ENCODE measurements at regions of chr14 and their contacts with region 1.

Region 1: DNA sequence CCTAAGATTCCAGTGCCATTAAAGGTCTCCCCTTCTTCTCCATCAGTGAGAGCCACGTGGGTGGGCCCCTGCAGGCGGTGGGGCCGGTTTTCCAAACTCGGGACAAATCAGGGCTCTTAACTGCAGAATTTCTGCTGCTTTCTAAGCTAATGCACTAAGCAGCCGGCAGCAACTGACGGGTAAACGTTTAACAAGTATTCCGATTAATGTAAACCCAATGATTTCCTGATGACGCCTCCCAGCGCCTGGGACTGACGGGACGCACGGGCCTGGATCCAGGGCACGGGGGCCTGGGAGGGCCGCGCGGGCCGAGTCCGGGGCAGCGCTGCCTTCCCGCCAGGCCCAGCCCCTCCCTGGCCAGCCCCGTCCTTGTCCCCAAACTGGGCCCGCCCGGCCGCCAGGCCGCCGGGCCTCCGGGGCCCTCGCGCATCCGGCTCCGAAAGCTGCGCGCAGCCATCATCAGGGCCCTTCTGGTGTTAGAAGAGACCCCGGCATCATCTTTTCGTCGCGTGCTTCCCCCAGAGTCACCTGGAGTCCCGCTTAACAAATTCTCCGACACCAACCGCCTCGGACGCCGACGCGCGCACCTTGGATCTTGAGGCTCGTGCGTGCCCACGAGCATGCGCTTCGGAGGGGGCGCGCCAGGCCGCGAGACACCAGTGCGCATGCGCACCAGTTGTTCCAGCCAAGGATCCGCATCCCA is at the start of gene MLH3:
- DNase-seq: peak; percentile 80
- H3K4me3 ChIP-seq: peak within 1 kb of the TSS; percentile 60 to 74
- H3K27ac ChIP-seq: peak within 1 kb of the TSS; percentile 87 to 93
- H3K4me1 ChIP-seq: peaks cover 3% of the 10 kb centered on the region
- H3K27me3 ChIP-seq: no peaks in the 10 kb centered on the region
- CTCF ChIP-seq: no peak
- POLR2A ChIP-seq: peak; percentile 72
- total RNA-seq, gene MLH3: 23.3 to 29.6 TPM

Region 2: GRCh38 chr14:74793506-74794168 is 257.4 kb before region 1 on chr14:
- intact Hi-C with region 1: no loop called
- DNase-seq: no peak
- H3K4me3 ChIP-seq: no peak overlapping the region
- H3K27ac ChIP-seq: peak overlapping the region; percentile 6 to 39
- H3K4me1 ChIP-seq: peaks cover 4% of the 10 kb centered on the region
- H3K27me3 ChIP-seq: no peaks in the 10 kb centered on the region
- CTCF ChIP-seq: peak in 1 of 4 experiments; percentile 30
- POLR2A ChIP-seq: no peak

Region 3: DNA sequence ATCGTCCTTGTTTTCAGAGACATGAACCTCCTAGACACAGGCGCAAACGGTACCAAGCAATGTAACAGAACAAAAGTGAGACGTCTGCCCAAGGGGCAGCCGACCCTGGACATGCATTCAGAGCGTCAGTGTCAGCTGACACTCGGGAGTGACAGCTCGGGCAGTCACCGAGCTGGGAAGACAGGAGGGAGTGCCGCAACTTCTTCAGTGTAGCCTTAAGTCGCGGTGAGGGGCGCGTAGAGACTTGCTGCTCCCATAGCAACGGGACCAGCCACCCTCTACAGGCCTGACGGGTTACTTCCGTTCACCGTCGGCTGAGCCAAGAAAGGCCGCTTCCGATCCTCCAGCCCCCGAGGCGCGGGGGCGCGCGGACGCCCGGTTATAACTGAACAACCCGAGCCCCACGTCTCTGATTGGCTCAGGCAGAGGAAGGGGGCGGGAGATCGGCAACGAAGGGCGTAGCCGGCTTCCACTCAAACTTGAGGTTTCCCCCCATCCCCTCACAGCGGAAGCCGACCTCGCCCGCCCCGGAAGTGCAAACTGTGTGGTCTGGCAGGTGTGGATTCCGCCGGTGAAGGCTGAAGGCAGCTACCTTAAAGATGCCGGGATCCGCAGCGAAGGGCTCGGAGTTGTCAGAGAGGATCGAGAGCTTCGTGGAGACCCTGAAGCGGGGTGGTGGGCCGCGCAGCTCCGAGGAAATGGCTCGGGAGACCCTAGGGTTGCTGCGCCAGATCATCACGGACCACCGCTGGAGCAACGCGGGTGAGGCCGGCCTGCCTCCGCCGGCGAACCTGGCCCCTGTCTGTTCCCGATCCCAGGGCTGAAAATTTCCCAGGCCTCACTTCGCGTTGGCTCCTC is 48.4 kb before region 1 on chr14 and contains the start of gene EIF2B2:
- intact Hi-C with region 1: no loop called
- DNase-seq: peak; percentile 98
- H3K4me3 ChIP-seq: peak within 1 kb of the TSS; percentile 53 to 67
- H3K27ac ChIP-seq: peak within 1 kb of the TSS; percentile 67 to 80
- H3K4me1 ChIP-seq: peaks cover 8% of the 10 kb centered on the region
- H3K27me3 ChIP-seq: no peaks in the 10 kb centered on the region
- CTCF ChIP-seq: peak in 2 of 4 experiments; percentile 46 to 52
- POLR2A ChIP-seq: peak; percentile 45
- total RNA-seq, gene EIF2B2: 43.9 to 60.4 TPM

Region 4: DNA sequence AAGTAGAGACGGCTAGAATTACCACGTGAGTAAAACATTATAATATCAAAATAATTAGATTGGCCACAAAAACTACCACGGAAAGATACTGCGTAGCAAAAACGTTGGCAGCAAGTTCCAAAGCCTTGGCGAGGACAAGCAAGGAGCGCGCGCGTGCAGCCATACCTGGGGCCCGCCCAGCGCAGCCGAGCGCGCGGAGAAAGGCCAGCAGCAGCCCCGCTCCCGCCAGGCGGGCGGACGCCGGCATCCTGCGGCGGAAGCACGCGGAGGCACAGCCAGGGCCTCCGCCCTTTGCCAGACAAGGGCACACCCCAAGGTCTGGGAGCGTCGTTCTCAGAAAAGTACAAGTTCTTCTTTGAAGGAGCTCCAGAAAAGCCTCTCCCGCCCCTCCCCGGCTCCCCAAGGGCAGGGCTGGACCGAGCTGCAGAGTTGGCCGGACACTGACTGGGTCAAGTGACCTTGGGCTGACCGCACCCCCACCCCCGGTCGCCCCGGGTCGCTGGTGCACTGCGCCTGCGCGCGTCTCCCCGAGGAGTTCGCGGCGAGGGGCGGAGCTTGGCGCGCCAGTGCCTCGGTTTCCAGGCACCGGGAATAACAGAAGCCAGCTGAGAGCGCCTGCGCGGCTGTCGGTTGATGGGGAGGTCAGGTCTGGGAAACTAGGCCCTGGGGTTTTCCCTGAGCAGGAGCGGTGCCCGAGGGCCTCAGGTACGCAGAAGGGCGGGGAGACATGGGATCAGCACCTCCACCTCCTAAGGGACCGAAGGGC is 18.2 kb after region 1 on chr14 and contains the start of gene ZC2HC1C:
- intact Hi-C with region 1: loop called (anchors 2 kb)
- DNase-seq: peak; percentile 88
- H3K4me3 ChIP-seq: peak within 1 kb of the TSS; percentile 36 to 54
- H3K27ac ChIP-seq: peak within 1 kb of the TSS; percentile 86 to 91
- H3K4me1 ChIP-seq: no peaks in the 10 kb centered on the region
- H3K27me3 ChIP-seq: no peaks in the 10 kb centered on the region
- CTCF ChIP-seq: peak in 1 of 4 experiments; percentile 12
- POLR2A ChIP-seq: peak; percentile 22
- total RNA-seq, gene ZC2HC1C: 1.8 to 19.4 TPM

Region 5: DNA sequence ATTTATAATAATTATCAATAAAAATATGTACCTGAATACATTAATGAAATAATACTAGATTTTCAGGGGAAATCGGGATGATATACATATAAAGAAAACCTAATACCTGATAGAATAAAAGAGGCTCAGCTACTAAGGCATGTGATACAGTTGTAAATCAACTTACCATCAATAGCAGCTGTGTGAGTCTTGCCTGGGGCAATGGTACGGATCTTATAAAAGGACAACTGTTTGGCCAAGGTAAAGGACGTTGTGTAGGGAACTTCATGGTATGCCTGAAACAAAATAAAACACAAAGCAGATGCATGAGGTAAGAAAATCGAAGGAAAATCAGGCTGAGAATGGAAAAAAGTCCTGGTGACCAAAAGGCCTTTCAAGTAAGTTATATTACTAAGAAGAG is 50.5 kb after region 1 on chr14:
- intact Hi-C with region 1: no loop called
- DNase-seq: peak; percentile 35
- H3K4me3 ChIP-seq: no peak overlapping the region
- H3K27ac ChIP-seq: peak overlapping the region in 1 of 2 donors; percentile 53
- H3K4me1 ChIP-seq: no peaks in the 10 kb centered on the region
- H3K27me3 ChIP-seq: no peaks in the 10 kb centered on the region
- CTCF ChIP-seq: no peak
- POLR2A ChIP-seq: no peak

Region 6: GRCh38 chr14:75293920-75294642 is 243.1 kb after region 1 on chr14:
- intact Hi-C with region 1: no loop called
- DNase-seq: peak; percentile 93
- H3K4me3 ChIP-seq: peak overlapping the region; percentile 37 to 53
- H3K27ac ChIP-seq: peak overlapping the region; percentile 79 to 86
- H3K4me1 ChIP-seq: peaks cover 6% of the 10 kb centered on the region
- H3K27me3 ChIP-seq: no peaks in the 10 kb centered on the region
- CTCF ChIP-seq: peak in 1 of 4 experiments; percentile 27
- POLR2A ChIP-seq: no peak

Measured in prostate gland (tissue), 2 donors.